H1 (cell line): ENCODE measurements at regions of chr5 and their contacts with region 1.

Region 1: DNA sequence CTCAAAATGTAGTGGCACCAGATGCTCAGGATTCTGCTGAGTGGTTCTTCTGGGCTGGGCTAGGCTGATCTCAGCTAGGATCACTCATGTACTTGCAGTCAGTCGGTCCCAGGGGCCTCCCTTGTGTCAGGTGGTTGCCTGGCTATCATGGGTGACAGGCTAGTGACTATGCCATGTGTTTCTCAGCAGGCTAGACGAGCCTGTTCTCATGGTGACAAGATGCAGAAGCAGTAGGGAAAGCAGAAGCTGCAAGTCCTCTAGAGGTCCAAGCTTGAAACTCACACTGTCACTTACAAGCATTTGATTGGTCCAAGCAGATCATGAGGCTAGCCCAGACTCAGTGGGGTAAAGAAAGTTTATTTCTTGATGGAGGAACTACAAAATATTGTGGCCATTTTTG is 15.2 kb upstream of the KCNMB1 start:
- DNase-seq: no peak
- H3K4me3 ChIP-seq: no peak overlapping the region
- H3K27ac ChIP-seq: no peak overlapping the region
- H3K4me1 ChIP-seq: peaks cover 9 to 15% (median 13%) of the 10 kb centered on the region in 4 experiments; a peak in 6 of 7 replicates
- H3K27me3 ChIP-seq: no peaks in the 10 kb centered on the region
- CTCF ChIP-seq: no peak
- EP300 ChIP-seq: no peak
- POLR2A ChIP-seq: no peak
- RAD21 ChIP-seq: no peak

Region 2: DNA sequence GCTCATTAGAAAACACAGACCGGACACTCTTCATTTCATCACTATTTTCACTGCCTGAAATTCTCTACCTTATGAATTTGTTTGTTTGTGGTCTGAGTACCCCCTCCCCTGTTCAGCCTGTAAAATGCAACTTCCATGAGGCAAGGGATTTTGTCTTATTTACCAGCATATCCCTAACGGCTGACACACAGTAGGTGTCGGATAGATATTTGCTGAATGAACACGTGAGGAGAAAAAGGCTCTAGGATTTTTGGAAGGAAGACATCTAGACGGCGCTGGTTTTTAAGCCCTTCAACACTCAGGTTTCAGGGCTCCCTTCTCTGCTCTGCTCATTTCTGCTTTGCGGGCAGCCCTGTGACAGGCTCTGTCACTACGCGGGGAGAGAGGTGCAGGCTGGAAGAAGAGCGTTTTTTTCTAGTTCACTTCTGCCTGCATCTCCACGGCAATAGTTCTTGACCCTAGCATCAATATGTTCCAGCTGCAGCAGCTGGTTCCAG is 56.2 kb before region 1 on chr5:
- CTCF ChIA-PET with region 1: interaction called, 34 read pairs
- POLR2A ChIA-PET with region 1: interaction called, 3 read pairs
- DNase-seq: no peak
- H3K4me3 ChIP-seq: no peak overlapping the region
- H3K27ac ChIP-seq: no peak overlapping the region
- H3K4me1 ChIP-seq: peaks cover 9 to 13% (median 10%) of the 10 kb centered on the region in 4 experiments; a peak in 6 of 7 replicates
- H3K27me3 ChIP-seq: peaks cover 0 to 4% (median 1%) of the 10 kb centered on the region in 4 experiments; a peak in 5 of 7 replicates
- CTCF ChIP-seq: peak in 2 of 3 experiments; percentile 27 to 28; a peak in 2 of 4 replicates
- EP300 ChIP-seq: no peak
- POLR2A ChIP-seq: no peak
- RAD21 ChIP-seq: peak; percentile 57 to 68

Region 3: DNA sequence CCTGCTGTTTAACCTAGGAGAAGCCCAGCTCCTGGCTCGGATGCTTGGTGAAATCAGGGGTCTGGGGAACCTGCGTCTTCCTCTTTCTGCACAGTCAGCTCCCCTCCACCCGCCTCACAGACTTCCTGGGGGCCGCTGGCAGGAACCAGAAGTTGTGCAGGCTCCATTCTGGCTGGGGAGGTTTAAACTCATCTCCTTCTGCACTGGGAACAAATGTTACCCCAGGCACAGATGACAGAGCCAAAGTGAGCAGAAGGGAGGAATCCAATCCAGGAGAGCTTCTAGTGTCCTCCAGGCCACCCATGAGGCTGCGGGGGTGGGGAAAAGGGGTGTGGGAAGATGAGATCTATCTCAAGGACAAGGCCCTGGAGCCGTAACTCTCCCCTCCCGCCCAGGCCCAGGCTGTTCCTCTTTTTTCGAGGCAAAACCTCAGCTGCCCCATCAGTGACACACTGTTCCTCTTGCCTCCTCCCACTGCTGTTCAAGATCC is 46.4 kb before region 1 on chr5:
- CTCF ChIA-PET with region 1: interaction called, 14 read pairs
- POLR2A ChIA-PET with region 1: no interaction called
- DNase-seq: no peak
- H3K4me3 ChIP-seq: no peak overlapping the region
- H3K27ac ChIP-seq: no peak overlapping the region
- H3K4me1 ChIP-seq: peaks cover 5 to 20% (median 13%) of the 10 kb centered on the region in 4 experiments
- H3K27me3 ChIP-seq: peaks cover 0 to 4% (median 1%) of the 10 kb centered on the region in 4 experiments; a peak in 3 of 7 replicates
- CTCF ChIP-seq: no peak
- EP300 ChIP-seq: no peak
- POLR2A ChIP-seq: no peak
- RAD21 ChIP-seq: no peak

Region 4: GRCh38 chr5:170388818-170389549 is 15.4 kb before region 1 on chr5 and contains the start of gene KCNMB1:
- CTCF ChIA-PET with region 1: interaction called, 19 read pairs
- POLR2A ChIA-PET with region 1: interaction called, 6 read pairs
- DNase-seq: no peak
- H3K4me3 ChIP-seq: no peak within 1 kb of the TSS
- H3K27ac ChIP-seq: no peak within 1 kb of the TSS
- H3K4me1 ChIP-seq: peaks cover 0 to 21% (median 9%) of the 10 kb centered on the region in 4 experiments; a peak in 4 of 7 replicates
- H3K27me3 ChIP-seq: no peaks in the 10 kb centered on the region; a peak in 1 of 7 replicates
- CTCF ChIP-seq: no peak
- EP300 ChIP-seq: no peak
- POLR2A ChIP-seq: no peak
- RAD21 ChIP-seq: no peak
- total RNA-seq, gene KCNMB1: 0.10 and 0.19 TPM in 2 replicates

Region 5: GRCh38 chr5:170420780-170421412 is 16.5 kb after region 1 on chr5:
- CTCF ChIA-PET with region 1: interaction called, 26 read pairs
- POLR2A ChIA-PET with region 1: no interaction called
- DNase-seq: peak in 1 of 2 experiments; percentile 72
- H3K4me3 ChIP-seq: no peak overlapping the region
- H3K27ac ChIP-seq: no peak overlapping the region
- H3K4me1 ChIP-seq: peaks cover 0 to 2% (median 0%) of the 10 kb centered on the region in 4 experiments; a peak in 2 of 7 replicates
- H3K27me3 ChIP-seq: no peaks in the 10 kb centered on the region
- CTCF ChIP-seq: peak; percentile 51 to 89 (median 87)
- EP300 ChIP-seq: no peak
- POLR2A ChIP-seq: no peak
- RAD21 ChIP-seq: peak; percentile 82 to 85

Region 6: GRCh38 chr5:170429014-170429413 is 24.6 kb after region 1 on chr5:
- CTCF ChIA-PET with region 1: interaction called, 26 read pairs
- POLR2A ChIA-PET with region 1: no interaction called
- DNase-seq: no peak
- H3K4me3 ChIP-seq: no peak overlapping the region
- H3K27ac ChIP-seq: no peak overlapping the region
- H3K4me1 ChIP-seq: peaks cover 0 to 6% (median 2%) of the 10 kb centered on the region in 4 experiments; a peak in 1 of 7 replicates
- H3K27me3 ChIP-seq: no peaks in the 10 kb centered on the region; a peak in 1 of 7 replicates
- CTCF ChIP-seq: peak; percentile 38 to 50 (median 40); a peak in 3 of 4 replicates
- EP300 ChIP-seq: no peak
- POLR2A ChIP-seq: no peak
- RAD21 ChIP-seq: peak in 1 of 2 experiments; percentile 49; a peak in 2 of 4 replicates

Region 7: GRCh38 chr5:170885779-170886178 is 481.4 kb after region 1 on chr5:
- CTCF ChIA-PET with region 1: no interaction called
- POLR2A ChIA-PET with region 1: no interaction called
- DNase-seq: no peak
- H3K4me3 ChIP-seq: no peak overlapping the region
- H3K27ac ChIP-seq: no peak overlapping the region
- H3K4me1 ChIP-seq: no peaks in the 10 kb centered on the region
- H3K27me3 ChIP-seq: no peaks in the 10 kb centered on the region
- CTCF ChIP-seq: no peak
- EP300 ChIP-seq: no peak
- POLR2A ChIP-seq: no peak
- RAD21 ChIP-seq: no peak